ENCODE measurements at regions of chr3 and their contacts with region 1.

Region 1: DNA sequence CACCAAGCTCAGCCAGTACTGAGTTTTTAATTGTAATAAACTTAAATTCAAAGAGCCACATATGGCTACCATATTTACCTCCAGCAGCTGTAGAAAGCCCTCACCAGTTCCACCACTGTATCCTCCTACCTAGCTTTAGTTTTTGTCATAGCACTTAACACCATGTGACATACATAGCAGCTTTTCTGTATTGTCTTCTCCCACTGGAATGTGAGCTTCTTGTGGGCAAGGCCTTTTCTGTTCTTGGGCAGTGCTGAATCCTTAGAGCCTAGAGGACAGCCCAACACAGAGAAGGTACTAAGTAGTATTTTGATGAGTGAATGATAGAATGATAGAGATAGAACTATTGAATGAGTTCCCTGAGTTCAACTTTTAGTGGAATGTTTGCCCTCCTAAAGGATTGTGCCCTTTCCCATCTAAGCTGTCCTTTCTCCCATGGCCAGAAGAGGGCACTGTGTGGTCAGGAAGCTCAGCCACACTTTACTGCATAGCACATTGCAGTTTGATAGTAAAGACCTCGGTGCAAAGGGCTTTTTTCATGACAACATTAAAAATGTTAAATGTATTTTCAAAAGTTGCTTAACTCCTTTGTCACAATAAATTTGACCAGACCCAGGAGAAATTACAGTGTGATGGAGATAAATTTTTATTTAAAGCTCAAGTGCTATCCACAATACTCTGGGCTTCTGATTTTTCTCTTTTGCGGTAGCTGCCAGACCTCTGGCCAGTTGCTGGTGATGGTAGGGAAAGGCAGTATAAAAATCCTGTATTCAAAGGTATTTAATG is 115.8 kb downstream of the GHSR start:
- DNase-seq: peak; percentile 67
- CTCF ChIP-seq: peak; percentile 91

Region 2: DNA sequence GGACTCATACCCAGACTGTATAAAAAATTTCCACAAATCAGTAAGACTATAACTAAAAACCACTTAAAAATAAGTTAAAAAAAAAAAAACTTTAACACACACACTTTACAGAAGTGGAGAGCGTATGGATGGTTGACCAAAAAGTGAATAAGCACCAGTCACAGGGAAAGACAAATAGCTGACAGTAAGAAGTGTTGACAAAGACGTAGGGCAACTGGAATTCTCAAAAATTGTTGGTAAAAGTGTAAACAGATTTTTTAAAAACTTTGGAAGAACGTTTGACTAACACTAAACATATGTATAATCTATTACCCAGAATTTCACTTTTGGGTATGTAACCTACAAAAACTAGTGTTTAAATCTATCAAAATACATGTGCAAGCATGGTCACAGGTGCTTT is 415.6 kb before region 1 on chr3:
- CTCF ChIA-PET with region 1: no interaction called
- POLR2A ChIA-PET with region 1: no interaction called
- DNase-seq: no peak
- CTCF ChIP-seq: no peak

Region 3: DNA sequence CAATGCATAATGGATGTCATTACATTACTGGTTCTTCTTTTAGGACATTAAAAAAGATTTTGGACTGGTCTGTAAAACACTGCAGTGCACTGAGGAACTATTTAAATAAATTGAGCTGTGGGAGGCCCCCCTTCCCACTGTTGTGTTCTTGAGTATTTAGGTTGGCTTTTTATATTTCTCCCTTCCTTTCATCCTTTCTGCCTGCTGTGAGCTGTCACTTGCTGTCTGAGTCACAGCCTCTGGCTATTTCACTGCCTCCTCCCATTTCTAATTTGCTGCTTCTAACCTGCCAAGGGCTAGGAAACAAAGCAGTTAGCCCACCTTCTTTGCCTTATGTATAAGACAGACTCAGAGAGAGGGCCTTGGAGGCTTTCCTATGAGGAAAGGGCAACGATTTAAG is 382.1 kb before region 1 on chr3:
- CTCF ChIA-PET with region 1: no interaction called
- POLR2A ChIA-PET with region 1: no interaction called
- DNase-seq: no peak
- CTCF ChIP-seq: no peak

Region 4: DNA sequence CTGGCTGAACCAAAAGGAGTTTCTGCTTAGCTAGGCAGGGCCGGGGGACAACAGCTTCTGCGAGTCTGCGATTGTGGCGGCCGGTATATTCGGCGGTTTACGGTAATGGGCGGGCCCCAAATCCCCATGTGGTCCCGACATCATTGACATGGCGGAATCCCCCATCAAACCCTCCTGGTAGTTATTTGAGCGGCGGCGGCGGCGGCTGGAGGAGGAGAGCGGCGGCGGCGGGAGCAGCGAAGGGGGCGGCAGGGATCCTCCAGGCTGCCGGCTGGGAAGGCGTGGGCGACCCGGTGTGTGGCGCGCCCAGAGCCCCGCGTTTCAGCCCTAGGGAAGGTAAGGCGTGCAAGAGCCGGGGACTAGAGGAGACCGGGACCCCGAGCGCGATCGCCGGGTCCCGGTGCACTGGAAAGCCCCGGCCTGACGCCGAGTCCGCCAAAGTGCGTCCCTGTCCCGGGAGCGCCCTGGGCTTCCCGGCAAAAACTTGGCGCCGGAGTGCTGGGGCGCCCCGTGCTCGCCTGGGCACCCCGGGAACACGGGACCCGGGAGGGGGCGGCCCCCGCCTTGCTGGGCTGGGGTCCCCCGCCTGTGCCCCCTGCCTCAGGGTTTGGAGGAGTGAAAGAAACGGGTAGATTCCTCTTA is 292.9 kb before region 1 on chr3 and contains the start of gene FNDC3B:
- CTCF ChIA-PET with region 1: interaction called, 10 read pairs
- POLR2A ChIA-PET with region 1: no interaction called
- DNase-seq: peak; percentile 88
- CTCF ChIP-seq: no peak

Region 5: DNA sequence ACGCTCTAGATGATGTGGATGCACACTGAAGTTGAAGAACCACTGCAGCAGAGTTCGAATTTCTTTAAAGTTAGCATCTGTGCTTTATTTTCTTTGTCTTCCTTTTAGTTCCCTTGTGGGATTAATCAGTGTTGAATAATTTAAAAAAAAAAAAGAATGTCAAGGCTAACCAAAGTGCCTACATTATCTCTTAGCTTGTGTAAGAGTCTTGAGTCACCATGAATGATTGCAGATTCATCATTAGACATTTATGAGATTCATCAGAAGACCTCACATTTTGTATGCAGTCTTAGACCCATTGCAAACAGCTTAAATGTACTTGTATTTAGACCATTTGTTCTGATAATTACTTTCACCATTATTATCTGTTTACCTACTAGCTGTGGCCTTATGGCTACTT is 110.9 kb before region 1 on chr3:
- CTCF ChIA-PET with region 1: no interaction called
- POLR2A ChIA-PET with region 1: no interaction called
- DNase-seq: no peak
- CTCF ChIP-seq: no peak

Region 6: GRCh38 chr3:172307141-172307560 is 25.3 kb before region 1 on chr3:
- CTCF ChIA-PET with region 1: interaction called, 43 read pairs
- POLR2A ChIA-PET with region 1: no interaction called
- DNase-seq: no peak
- CTCF ChIP-seq: no peak

Region 7: GRCh38 chr3:172317984-172318383 is 14.5 kb before region 1 on chr3:
- CTCF ChIA-PET with region 1: interaction called, 97 read pairs
- POLR2A ChIA-PET with region 1: interaction called, 3 read pairs
- DNase-seq: peak; percentile 44
- CTCF ChIP-seq: no peak

Region 8: DNA sequence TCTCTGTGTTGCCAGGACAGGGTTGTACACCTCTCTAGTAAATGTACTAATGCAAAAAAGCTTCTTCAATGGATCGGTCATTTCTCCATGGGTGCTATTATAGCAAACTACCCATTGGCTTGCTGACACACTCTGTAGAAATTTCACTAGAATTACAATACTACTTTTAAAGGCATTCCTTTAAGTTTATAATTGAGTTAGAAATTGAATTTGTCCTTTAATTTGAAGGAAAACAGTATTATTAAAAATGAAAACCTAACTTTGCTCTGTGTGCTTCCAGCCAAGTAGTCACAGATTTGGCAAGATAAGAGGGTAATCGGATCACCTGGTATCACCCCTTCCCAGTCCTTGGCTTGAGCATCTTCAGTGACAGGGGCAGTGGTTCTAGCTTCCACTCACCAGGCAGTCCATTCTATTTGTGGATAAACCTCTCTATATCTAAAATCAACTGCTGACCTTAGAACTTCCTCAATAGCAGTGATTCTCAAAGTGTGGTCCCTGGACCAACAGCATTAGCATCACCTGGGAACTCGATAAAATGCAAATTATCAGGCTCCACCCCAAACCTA is 22.6 kb after region 1 on chr3:
- CTCF ChIA-PET with region 1: interaction called, 15 read pairs
- POLR2A ChIA-PET with region 1: no interaction called
- DNase-seq: no peak
- CTCF ChIP-seq: no peak

Region 9: GRCh38 chr3:172364374-172365027 is 32.1 kb after region 1 on chr3:
- CTCF ChIA-PET with region 1: interaction called, 10 read pairs
- POLR2A ChIA-PET with region 1: no interaction called
- DNase-seq: no peak
- CTCF ChIP-seq: no peak

Region 10: GRCh38 chr3:172666873-172667694 is 334.6 kb after region 1 on chr3:
- CTCF ChIA-PET with region 1: interaction called, 24 read pairs
- POLR2A ChIA-PET with region 1: no interaction called
- DNase-seq: peak; percentile 65
- CTCF ChIP-seq: peak; percentile 75